Activated naive CD8-positive, alpha-beta T cell treated with anti-CD3 and anti-CD28 coated beads, Interleukin-2, amount 10 ng/mL, durations not matched to agents 7 days and 5 days (primary cell): ENCODE measurements at regions of chr6 and their contacts with region 1.

Region 1: GRCh38 chr6:30742316-30743098 is at the start of gene FLOT1:
- DNase-seq: peak; percentile 98
- ATAC-seq: peak; percentile 82
- H3K4me3 Mint-ChIP-seq: peak within 1 kb of the TSS; percentile 98
- H3K27ac Mint-ChIP-seq: peak within 1 kb of the TSS; percentile 96
- H3K4me1 Mint-ChIP-seq: peaks cover 48% of the 10 kb centered on the region
- H3K27me3 Mint-ChIP-seq: no peaks in the 10 kb centered on the region
- total RNA-seq, gene FLOT1: 261 to 271 TPM

Region 2: GRCh38 chr6:29097803-29098202 is 1644.7 kb before region 1 on chr6:
- POLR2A ChIA-PET with region 1: no interaction called
- DNase-seq: no peak
- ATAC-seq: no peak
- H3K4me3 Mint-ChIP-seq: no peak overlapping the region
- H3K27ac Mint-ChIP-seq: no peak overlapping the region
- H3K4me1 Mint-ChIP-seq: no peaks in the 10 kb centered on the region
- H3K27me3 Mint-ChIP-seq: peaks cover 8% of the 10 kb centered on the region

Region 3: GRCh38 chr6:29763491-29764289 is 978.8 kb before region 1 on chr6:
- POLR2A ChIA-PET with region 1: no interaction called
- DNase-seq: no peak
- ATAC-seq: peak; percentile 60
- H3K4me3 Mint-ChIP-seq: no peak overlapping the region
- H3K27ac Mint-ChIP-seq: peak overlapping the region; percentile 66
- H3K4me1 Mint-ChIP-seq: peaks cover 27% of the 10 kb centered on the region
- H3K27me3 Mint-ChIP-seq: peaks cover 2% of the 10 kb centered on the region

Region 4: DNA sequence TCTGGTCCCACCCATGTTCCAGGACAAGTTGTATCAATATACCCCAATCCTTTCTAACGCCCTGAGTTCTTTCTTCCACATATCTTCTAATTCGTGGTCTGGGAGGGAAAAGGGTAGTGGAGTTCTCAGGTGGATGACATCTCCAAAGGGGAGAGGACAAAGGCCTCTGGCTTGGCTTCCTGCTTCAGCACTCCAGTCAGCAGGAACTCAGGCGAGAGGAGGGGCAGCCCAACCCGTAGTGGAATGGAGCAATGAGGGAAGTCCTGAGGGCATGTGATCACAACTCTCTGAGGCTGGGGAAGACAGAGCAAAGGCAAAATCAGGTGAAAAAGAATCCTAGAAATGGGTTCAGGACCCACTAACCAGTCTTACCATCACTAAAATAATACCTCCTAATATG is 42.2 kb before region 1 on chr6:
- POLR2A ChIA-PET with region 1: no interaction called
- DNase-seq: no peak
- ATAC-seq: no peak
- H3K4me3 Mint-ChIP-seq: no peak overlapping the region
- H3K27ac Mint-ChIP-seq: no peak overlapping the region
- H3K4me1 Mint-ChIP-seq: no peaks in the 10 kb centered on the region
- H3K27me3 Mint-ChIP-seq: no peaks in the 10 kb centered on the region

Region 5: DNA sequence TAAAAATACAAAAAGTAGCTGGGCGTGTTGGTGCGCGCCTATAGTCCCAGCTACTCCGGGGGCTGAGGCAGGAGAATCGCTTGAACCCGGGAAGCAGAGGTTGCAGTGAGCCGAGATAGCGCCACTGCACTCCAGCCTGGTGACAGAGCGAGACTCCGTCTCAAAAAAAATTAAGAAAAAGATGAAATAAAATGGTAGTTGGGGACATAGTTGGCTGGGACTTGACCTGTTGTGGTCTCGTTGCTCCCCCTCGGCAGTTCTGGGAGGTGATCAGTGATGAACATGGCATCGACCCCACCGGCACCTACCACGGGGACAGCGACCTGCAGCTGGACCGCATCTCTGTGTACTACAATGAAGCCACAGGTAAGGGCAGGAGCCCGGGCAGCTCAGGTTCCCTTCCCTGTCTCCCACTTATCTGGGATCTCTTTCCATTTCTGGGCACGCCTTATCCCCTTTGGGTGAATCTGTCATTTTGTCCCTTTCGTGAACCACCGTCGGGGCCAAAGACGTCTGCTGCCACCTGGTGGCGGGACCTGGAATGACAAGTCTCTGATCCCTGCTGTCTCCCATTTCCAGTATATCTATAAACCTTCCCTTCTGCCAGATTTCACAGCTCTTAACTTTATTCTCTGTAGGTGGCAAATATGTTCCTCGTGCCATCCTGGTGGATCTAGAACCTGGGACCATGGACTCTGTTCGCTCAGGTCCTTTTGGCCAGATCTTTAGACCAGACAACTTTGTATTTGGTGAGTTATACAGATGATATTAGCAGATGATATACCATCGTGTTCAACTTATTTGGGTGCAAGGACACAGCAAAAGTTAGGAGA is 20.0 kb before region 1 on chr6:
- POLR2A ChIA-PET with region 1: interaction called, 25 read pairs
- DNase-seq: peak; percentile 87
- ATAC-seq: no peak
- H3K4me3 Mint-ChIP-seq: peak overlapping the region; percentile 91
- H3K27ac Mint-ChIP-seq: peak overlapping the region; percentile 93
- H3K4me1 Mint-ChIP-seq: peaks cover 46% of the 10 kb centered on the region
- H3K27me3 Mint-ChIP-seq: no peaks in the 10 kb centered on the region

Region 6: GRCh38 chr6:30769088-30769852 is 26.8 kb after region 1 on chr6:
- POLR2A ChIA-PET with region 1: interaction called, 31 read pairs
- DNase-seq: peak; percentile 77
- ATAC-seq: peak; percentile 75
- H3K4me3 Mint-ChIP-seq: peak overlapping the region; percentile 75
- H3K27ac Mint-ChIP-seq: peak overlapping the region; percentile 93
- H3K4me1 Mint-ChIP-seq: peaks cover 76% of the 10 kb centered on the region
- H3K27me3 Mint-ChIP-seq: no peaks in the 10 kb centered on the region

Region 7: DNA sequence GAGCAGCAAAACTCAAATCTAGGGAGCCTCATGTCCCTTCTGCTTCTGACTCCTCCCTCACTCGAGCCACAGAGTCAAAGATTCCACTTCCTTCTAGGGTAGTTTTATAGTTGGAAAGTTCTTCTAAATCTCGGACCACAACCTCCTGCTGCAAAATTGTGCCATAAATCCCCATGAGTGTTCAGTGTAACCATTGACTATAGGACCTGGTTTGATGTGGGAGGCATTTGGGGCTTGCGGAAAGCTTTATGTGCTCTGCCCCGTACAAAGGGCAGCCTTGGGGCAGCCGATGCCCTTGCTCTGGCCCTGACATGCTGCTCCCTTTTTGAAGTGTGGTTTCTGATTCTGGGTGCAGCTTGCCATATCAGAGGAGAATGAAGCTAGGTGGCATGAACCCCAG is 45.4 kb after region 1 on chr6:
- POLR2A ChIA-PET with region 1: interaction called, 40 read pairs
- DNase-seq: peak; percentile 55
- ATAC-seq: peak; percentile 66
- H3K4me3 Mint-ChIP-seq: peak overlapping the region; percentile 69
- H3K27ac Mint-ChIP-seq: peak overlapping the region; percentile 89
- H3K4me1 Mint-ChIP-seq: peaks cover 63% of the 10 kb centered on the region
- H3K27me3 Mint-ChIP-seq: no peaks in the 10 kb centered on the region

Region 8: GRCh38 chr6:30793521-30794194 is 51.2 kb after region 1 on chr6:
- POLR2A ChIA-PET with region 1: interaction called, 40 read pairs
- DNase-seq: no peak
- ATAC-seq: peak; percentile 87
- H3K4me3 Mint-ChIP-seq: peak overlapping the region; percentile 73
- H3K27ac Mint-ChIP-seq: peak overlapping the region; percentile 96
- H3K4me1 Mint-ChIP-seq: peaks cover 60% of the 10 kb centered on the region
- H3K27me3 Mint-ChIP-seq: no peaks in the 10 kb centered on the region

Region 9: DNA sequence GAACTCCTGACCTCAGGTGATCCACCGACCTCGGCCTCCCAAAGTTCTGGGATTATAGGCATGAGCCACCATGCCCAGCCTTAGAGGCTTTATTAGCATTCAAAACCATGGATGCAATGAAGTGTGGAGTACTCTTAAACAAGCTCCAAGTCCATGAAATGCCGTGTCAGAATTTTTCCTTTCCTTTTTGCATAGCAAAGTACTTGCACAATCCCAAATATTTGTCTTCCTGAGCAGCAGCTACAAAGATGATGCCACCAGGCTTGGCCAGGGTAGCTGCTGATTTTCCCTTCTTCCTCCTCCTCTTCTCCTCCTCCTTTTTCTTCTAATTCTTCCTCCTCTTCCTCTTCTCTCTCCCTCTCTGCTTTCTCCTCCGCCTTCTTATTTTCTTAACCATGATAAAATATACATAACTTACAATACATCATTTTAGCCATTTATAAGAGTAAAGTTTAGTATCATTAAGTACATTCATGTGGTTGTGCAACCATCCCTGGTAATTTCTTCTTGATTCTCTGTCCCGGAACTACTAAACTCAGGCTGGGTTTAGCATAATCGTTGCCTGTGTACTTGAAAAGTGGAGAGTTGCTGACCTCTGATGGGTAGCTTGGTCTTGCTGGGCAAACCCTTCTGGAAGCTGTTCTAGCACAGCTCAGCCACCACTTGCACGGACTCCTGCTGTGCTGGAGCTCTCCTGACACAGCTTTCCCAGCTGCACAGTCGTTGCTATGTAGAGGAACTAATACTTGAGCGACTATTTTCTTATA is 218.6 kb after region 1 on chr6:
- POLR2A ChIA-PET with region 1: no interaction called
- DNase-seq: no peak
- ATAC-seq: no peak
- H3K4me3 Mint-ChIP-seq: no peak overlapping the region
- H3K27ac Mint-ChIP-seq: no peak overlapping the region
- H3K4me1 Mint-ChIP-seq: peaks cover 26% of the 10 kb centered on the region
- H3K27me3 Mint-ChIP-seq: peaks cover 58% of the 10 kb centered on the region